ENCODE measurements at regions of chr1 and their contacts with region 1.

Region 1: GRCh38 chr1:207828485-207829158 is 76.8 kb downstream of the CD46 start:
- DNase-seq: peak; percentile 63 to 66
- H3K4me3 ChIP-seq: no peak overlapping the region
- H3K27ac ChIP-seq: no peak overlapping the region
- H3K4me1 ChIP-seq: no peaks in the 10 kb centered on the region; a peak in 1 of 7 replicates
- H3K27me3 ChIP-seq: no peaks in the 10 kb centered on the region
- CTCF ChIP-seq: peak; percentile 74 to 94 (median 91)
- EP300 ChIP-seq: no peak
- POLR2A ChIP-seq: no peak
- RAD21 ChIP-seq: peak; percentile 88 to 92

Region 2: GRCh38 chr1:207670192-207670591 is 158.4 kb before region 1 on chr1:
- CTCF ChIA-PET with region 1: no interaction called
- POLR2A ChIA-PET with region 1: no interaction called
- DNase-seq: no peak
- H3K4me3 ChIP-seq: no peak overlapping the region
- H3K27ac ChIP-seq: no peak overlapping the region
- H3K4me1 ChIP-seq: no peaks in the 10 kb centered on the region; a peak in 1 of 7 replicates
- H3K27me3 ChIP-seq: no peaks in the 10 kb centered on the region
- CTCF ChIP-seq: no peak
- EP300 ChIP-seq: no peak
- POLR2A ChIP-seq: no peak
- RAD21 ChIP-seq: no peak

Region 3: GRCh38 chr1:207754974-207755689 is 73.5 kb before region 1 on chr1:
- CTCF ChIA-PET with region 1: no interaction called
- POLR2A ChIA-PET with region 1: no interaction called
- DNase-seq: no peak
- H3K4me3 ChIP-seq: no peak overlapping the region
- H3K27ac ChIP-seq: no peak overlapping the region
- H3K4me1 ChIP-seq: peaks cover 0 to 7% (median 3%) of the 10 kb centered on the region in 4 experiments; a peak in 5 of 7 replicates
- H3K27me3 ChIP-seq: no peaks in the 10 kb centered on the region
- CTCF ChIP-seq: no peak
- EP300 ChIP-seq: no peak
- POLR2A ChIP-seq: no peak
- RAD21 ChIP-seq: no peak

Region 4: DNA sequence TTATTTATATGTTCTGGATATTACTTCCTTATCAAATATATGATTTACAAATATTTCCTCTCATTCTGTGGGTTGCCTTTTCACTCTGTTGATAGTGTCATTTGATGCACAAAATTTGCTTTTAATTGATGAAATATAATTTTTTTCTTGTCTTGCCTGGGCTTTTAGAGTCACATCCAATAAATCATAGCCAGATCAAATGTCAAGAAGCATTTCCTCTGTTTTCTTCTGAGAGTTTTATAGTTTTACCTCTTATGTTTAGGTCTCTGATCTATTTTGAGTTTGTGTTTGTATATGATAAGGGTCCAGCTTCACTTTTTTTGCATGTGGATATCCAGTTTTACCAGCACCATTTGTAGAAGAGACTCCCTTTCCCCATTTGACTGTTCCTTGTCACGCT is 47.3 kb before region 1 on chr1:
- CTCF ChIA-PET with region 1: no interaction called
- POLR2A ChIA-PET with region 1: no interaction called
- DNase-seq: no peak
- H3K4me3 ChIP-seq: no peak overlapping the region
- H3K27ac ChIP-seq: no peak overlapping the region
- H3K4me1 ChIP-seq: no peaks in the 10 kb centered on the region
- H3K27me3 ChIP-seq: no peaks in the 10 kb centered on the region
- CTCF ChIP-seq: no peak
- EP300 ChIP-seq: no peak
- POLR2A ChIP-seq: no peak
- RAD21 ChIP-seq: no peak

Region 5: DNA sequence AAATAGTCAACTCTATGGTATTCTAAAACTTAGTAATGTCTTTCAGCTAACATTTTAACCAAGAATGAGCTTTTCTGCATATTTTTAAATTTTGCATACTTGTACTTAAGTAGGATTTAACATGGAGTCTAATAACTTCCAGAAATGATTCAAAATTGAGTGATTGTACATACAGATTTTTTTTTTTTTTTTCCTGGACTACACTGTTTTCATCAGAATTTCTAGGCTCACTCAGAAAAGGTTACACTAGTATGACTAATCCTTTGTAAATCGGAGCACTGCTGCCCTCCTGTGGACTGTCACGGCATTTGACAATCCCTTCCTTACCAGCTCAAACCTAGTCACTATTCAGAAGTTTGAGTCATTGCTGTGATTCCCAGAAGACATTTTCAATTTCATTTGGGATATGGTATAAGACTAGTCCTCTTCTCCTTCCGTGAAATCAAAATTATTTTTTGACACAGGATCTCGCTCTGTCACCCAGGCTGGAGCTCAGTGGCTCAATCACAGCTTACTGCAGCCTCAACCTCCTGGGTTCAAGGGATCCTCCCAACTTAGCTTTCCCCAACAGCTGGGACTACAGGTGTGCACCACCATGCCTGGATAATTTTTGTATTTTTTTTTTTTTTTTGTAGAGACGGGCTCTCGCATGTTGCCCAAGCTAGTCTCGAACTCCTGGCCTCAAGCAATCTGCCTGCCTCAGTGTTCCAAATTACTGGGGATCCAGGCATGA is 31.2 kb before region 1 on chr1:
- CTCF ChIA-PET with region 1: interaction called, 22 read pairs
- POLR2A ChIA-PET with region 1: interaction called, 3 read pairs
- DNase-seq: peak; percentile 31 to 78
- H3K4me3 ChIP-seq: no peak overlapping the region
- H3K27ac ChIP-seq: no peak overlapping the region
- H3K4me1 ChIP-seq: peaks cover 0 to 2% (median 0%) of the 10 kb centered on the region in 4 experiments; a peak in 1 of 7 replicates
- H3K27me3 ChIP-seq: no peaks in the 10 kb centered on the region
- CTCF ChIP-seq: peak; percentile 41 to 83 (median 72)
- EP300 ChIP-seq: no peak
- POLR2A ChIP-seq: no peak
- RAD21 ChIP-seq: peak; percentile 69 to 72

Region 6: DNA sequence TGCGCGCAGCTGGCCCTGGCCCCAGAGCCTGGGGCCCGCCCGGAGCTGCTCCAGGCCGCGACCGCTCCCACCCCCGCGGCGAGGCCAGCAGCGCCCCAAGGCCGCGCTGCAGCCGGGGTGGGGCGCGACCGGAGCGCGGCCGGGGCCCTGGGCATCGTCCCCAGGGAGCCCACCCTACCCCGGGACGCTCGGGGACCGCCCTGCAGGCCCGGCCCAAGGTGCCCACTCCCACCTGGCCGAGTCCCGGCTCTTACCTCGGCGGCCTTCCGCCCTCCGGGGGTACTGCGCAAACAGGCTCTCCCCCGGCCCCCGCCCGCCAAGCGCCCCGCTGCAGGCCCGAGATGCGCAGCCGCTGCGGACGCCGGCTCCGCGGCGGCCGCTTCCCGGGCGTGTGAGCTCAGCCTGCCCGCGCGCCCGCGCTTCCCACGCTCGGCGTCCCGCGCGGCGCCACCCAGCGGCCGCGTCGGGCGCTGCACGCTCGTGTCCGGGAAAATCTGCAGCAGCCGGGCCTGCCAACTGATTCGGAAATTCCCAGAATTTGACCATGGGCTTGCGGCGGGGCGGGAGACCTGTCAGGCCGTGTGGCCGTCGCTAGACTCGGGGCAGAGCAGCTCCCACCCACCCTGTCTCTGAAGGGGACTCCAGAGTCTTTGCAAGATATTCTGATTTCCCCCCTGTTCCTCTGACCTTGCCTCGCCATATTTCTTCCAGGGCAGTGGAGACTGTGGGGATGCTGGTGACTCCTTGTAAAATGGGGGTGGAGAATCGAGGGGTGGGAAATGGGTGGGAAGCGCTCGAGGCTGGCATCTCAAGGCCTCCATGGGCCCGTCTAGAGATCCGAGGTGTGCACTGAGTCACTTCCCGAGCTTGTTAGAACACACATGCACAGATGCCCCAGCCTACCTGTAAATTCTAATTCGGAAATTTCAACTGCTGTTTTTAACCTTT is 40.4 kb after region 1 on chr1:
- CTCF ChIA-PET with region 1: interaction called, 60 read pairs
- POLR2A ChIA-PET with region 1: interaction called, 5 read pairs
- DNase-seq: peak; percentile 29 to 90
- H3K4me3 ChIP-seq: peak overlapping the region; percentile 34 to 68 (median 50)
- H3K27ac ChIP-seq: no peak overlapping the region
- H3K4me1 ChIP-seq: peaks cover 0 to 8% (median 5%) of the 10 kb centered on the region in 4 experiments; a peak in 6 of 7 replicates
- H3K27me3 ChIP-seq: peaks cover 0 to 23% (median 8%) of the 10 kb centered on the region in 4 experiments; a peak in 6 of 7 replicates
- CTCF ChIP-seq: peak; percentile 69 to 82 (median 72)
- EP300 ChIP-seq: peak in 1 of 2 experiments; percentile 81; a peak in 1 of 3 replicates
- POLR2A ChIP-seq: no peak
- RAD21 ChIP-seq: peak; percentile 25 to 61

Region 7: DNA sequence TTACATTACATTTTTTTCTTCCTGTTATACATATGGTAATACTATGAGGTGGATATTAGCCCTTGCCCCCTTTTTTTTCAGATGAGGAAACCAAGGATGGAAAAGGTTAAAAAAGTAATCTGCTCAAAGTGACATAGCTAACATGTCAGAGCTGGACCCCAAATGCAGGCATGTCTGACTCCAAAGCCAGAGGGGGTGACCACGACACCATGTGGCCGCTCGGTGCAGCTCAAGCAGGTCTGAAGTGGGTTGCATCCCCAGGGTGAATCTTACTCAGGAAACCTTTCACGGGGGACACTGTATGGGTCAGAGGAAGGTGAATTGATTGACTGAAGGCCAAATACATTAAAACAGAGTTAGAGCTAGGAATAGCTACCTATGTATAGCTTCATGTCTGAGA is 47.5 kb after region 1 on chr1:
- CTCF ChIA-PET with region 1: interaction called, 113 read pairs
- POLR2A ChIA-PET with region 1: no interaction called
- DNase-seq: no peak
- H3K4me3 ChIP-seq: no peak overlapping the region
- H3K27ac ChIP-seq: no peak overlapping the region
- H3K4me1 ChIP-seq: 0 out of 7 replicates have a peak, but pooled peaks cover 0 to 2% (median 0%) of the 10 kb centered on the region in 4 experiments
- H3K27me3 ChIP-seq: no peaks in the 10 kb centered on the region
- CTCF ChIP-seq: peak; percentile 50 to 66 (median 51)
- EP300 ChIP-seq: no peak
- POLR2A ChIP-seq: no peak
- RAD21 ChIP-seq: peak; percentile 21 to 50; a peak in 3 of 4 replicates

Region 8: DNA sequence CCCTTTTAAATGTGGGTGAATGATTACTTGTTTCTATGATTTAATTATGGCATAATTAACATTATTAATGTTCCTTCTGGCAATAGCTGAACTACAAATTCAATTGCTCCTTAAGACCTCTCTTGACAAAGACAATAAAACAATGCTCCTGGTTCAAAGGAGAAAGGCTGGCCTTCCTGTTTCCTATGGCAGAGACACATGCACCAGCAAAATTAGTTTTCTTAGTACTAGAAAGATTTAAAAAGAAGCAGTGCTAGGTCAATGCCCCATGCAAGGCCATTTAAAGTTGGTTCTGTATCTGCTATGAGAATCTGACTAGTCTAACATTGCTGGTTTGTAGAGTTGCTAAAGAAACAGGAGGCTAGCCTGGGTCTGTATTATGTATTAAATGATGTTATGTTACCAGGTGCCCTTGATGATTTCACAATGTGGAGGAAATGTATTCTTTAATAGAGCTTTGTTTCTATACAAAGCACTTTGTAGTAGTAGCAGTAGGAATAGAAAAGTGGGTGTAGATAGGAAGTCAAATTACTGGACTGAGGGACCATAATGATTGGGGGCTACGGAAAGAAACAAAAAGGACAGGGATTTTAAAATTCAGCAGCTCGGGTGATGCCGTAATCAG is 121.1 kb after region 1 on chr1:
- CTCF ChIA-PET with region 1: no interaction called
- POLR2A ChIA-PET with region 1: no interaction called
- DNase-seq: no peak
- H3K4me3 ChIP-seq: no peak overlapping the region
- H3K27ac ChIP-seq: no peak overlapping the region
- H3K4me1 ChIP-seq: no peaks in the 10 kb centered on the region
- H3K27me3 ChIP-seq: 0 out of 7 replicates have a peak, but pooled peaks cover 0 to 1% (median 0%) of the 10 kb centered on the region in 4 experiments
- CTCF ChIP-seq: no peak
- EP300 ChIP-seq: no peak
- POLR2A ChIP-seq: no peak
- RAD21 ChIP-seq: no peak

Region 9: GRCh38 chr1:207973898-207974568 is 145.4 kb after region 1 on chr1:
- CTCF ChIA-PET with region 1: interaction called, 10 read pairs
- POLR2A ChIA-PET with region 1: no interaction called
- DNase-seq: no peak
- H3K4me3 ChIP-seq: no peak overlapping the region
- H3K27ac ChIP-seq: no peak overlapping the region
- H3K4me1 ChIP-seq: no peaks in the 10 kb centered on the region
- H3K27me3 ChIP-seq: no peaks in the 10 kb centered on the region
- CTCF ChIP-seq: no peak
- EP300 ChIP-seq: no peak
- POLR2A ChIP-seq: no peak
- RAD21 ChIP-seq: no peak

Region 10: DNA sequence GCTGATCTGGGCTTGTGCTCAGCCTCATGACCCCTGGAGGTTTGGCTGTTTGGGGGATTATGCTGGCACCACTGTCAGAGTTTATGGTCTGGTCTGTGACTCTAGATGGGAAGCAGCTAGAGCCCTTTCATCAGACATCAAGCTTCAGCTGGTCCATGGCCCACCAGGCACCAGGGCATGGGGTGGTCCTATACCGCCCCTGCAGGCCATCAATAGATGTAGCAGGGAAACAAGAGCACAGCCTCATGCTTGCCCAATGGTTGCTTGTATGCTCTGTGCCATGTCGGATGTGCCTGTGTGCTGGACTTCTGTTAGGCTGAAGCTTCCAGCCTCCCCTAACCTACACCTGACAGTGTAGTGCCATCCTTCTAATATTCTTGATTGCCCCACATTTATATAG is 153.4 kb after region 1 on chr1:
- CTCF ChIA-PET with region 1: interaction called, 11 read pairs
- POLR2A ChIA-PET with region 1: no interaction called
- DNase-seq: peak in 1 of 2 experiments; percentile 52
- H3K4me3 ChIP-seq: no peak overlapping the region
- H3K27ac ChIP-seq: no peak overlapping the region
- H3K4me1 ChIP-seq: no peaks in the 10 kb centered on the region
- H3K27me3 ChIP-seq: no peaks in the 10 kb centered on the region
- CTCF ChIP-seq: peak; percentile 80 to 94 (median 93)
- EP300 ChIP-seq: no peak
- POLR2A ChIP-seq: no peak
- RAD21 ChIP-seq: peak; percentile 76 to 82

Measured in H1 (cell line).